GM18951 (cell line): ENCODE measurements at regions of chr1 and their contacts with region 1.

Region 1: DNA sequence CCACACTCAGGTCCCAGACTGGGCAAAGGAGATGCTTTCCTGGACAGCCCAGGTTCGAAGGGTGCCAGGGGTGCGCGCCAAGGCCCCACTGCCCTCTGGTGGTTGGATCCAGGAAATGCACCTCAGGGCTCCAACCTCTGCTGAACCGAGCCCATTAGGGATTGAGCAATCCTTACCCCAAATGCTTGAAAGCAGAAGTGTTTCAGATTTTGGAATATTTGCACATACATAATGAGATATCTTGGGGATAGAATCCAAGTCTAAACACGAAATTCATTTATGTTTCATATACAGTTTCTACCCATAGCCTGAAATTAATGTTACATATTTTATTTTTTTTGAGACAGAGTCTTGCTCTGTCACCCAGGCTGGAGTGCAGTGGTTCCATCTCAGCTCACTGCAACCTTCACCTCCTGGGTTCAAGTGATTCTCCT is 57.4 kb downstream of the SLC9A1 start:
- POLR2A ChIP-seq: no peak

Region 2: DNA sequence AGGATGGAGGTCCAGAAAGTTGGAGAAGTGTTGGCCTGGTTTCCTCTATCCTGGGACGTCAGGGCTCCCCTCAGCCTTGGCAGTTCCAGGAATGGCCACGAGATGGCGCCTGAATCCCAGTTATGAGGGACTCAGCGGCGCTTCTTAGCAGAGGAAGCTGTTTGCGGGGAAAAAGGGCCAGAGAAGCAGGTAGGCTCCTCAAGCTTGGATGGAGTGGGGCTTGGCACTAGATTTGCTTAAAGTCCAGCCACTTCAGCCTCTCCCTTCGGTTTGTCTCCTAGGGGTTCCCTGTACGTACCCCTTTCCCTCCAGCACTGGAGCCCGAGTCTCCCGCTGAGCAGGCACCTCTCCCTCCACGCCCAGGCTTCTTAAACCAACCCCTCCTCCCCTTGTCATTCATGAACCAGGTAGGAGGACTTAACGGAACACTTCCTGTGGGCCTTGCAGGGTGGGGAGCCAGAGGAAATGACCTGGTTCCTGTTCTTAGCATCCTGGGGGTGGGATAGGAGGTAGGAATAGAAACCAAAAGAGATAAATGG is 52.8 kb before region 1 on chr1:
- in situ Hi-C with region 1: loop called (anchors 10 kb)
- POLR2A ChIP-seq: no peak